Calu3 (cell line): ENCODE measurements at regions of chr18 and their contacts with region 1.

Region 1: GRCh38 chr18:74652392-74652988 is 54.8 kb downstream of the ZNF407 start:
- DNase-seq: peak; percentile 10
- H3K4me3 Mint-ChIP-seq: no peak overlapping the region
- H3K27ac Mint-ChIP-seq: no peak overlapping the region
- H3K4me1 Mint-ChIP-seq: peaks cover 1% of the 10 kb centered on the region
- H3K27me3 Mint-ChIP-seq: no peaks in the 10 kb centered on the region
- CTCF ChIP-seq: no peak

Region 2: GRCh38 chr18:74963820-74964446 is 311.4 kb after region 1 on chr18:
- CTCF ChIA-PET with region 1: no interaction called
- intact Hi-C with region 1: loop called (anchors 2 kb)
- DNase-seq: peak; percentile 43
- H3K4me3 Mint-ChIP-seq: no peak overlapping the region
- H3K27ac Mint-ChIP-seq: no peak overlapping the region
- H3K4me1 Mint-ChIP-seq: no peaks in the 10 kb centered on the region
- H3K27me3 Mint-ChIP-seq: no peaks in the 10 kb centered on the region
- CTCF ChIP-seq: peak; percentile 60

Region 3: GRCh38 chr18:75041586-75041985 is 389.1 kb after region 1 on chr18:
- CTCF ChIA-PET with region 1: interaction called, 6 read pairs
- intact Hi-C with region 1: loop called (anchors 1 kb)
- DNase-seq: no peak
- H3K4me3 Mint-ChIP-seq: no peak overlapping the region
- H3K27ac Mint-ChIP-seq: no peak overlapping the region
- H3K4me1 Mint-ChIP-seq: no peaks in the 10 kb centered on the region
- H3K27me3 Mint-ChIP-seq: no peaks in the 10 kb centered on the region
- CTCF ChIP-seq: peak; percentile 40

Region 4: DNA sequence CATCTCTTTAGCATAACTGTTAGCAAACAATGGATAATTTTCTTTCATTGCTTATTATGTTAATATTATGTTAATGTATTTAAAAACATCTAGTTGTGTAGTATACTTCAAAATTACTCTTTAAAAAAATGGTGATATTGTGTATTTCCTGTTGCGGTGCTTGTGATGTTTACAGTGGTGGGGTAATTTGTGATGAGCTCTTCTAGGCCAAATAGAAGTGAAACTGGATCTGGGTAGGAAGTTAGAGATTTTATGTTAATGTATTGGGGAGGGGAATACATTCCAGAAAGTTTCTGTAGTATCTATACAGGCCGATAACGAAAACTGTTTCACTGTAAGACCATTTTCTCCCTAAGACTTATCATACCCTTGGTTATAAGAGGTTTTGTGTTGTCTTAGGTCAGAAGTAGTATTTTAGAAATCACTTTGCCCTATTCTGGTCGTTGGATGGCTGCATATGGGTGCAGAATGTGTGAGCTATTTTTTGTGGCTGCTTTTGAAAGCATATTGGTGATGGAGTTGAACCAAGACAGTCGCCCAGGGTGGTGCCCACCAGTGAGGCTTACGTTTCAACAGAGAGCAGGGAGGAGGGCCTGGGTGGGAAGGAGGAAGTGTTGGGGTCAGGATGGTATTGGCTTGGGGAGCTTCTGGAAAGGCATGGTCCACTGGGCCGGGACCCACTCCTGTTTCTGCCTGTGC is 563.9 kb after region 1 on chr18:
- CTCF ChIA-PET with region 1: no interaction called
- intact Hi-C with region 1: loop called (anchors 5 kb)
- DNase-seq: no peak
- H3K4me3 Mint-ChIP-seq: no peak overlapping the region
- H3K27ac Mint-ChIP-seq: no peak overlapping the region
- H3K4me1 Mint-ChIP-seq: peaks cover 47% of the 10 kb centered on the region
- H3K27me3 Mint-ChIP-seq: no peaks in the 10 kb centered on the region
- CTCF ChIP-seq: no peak

Region 5: DNA sequence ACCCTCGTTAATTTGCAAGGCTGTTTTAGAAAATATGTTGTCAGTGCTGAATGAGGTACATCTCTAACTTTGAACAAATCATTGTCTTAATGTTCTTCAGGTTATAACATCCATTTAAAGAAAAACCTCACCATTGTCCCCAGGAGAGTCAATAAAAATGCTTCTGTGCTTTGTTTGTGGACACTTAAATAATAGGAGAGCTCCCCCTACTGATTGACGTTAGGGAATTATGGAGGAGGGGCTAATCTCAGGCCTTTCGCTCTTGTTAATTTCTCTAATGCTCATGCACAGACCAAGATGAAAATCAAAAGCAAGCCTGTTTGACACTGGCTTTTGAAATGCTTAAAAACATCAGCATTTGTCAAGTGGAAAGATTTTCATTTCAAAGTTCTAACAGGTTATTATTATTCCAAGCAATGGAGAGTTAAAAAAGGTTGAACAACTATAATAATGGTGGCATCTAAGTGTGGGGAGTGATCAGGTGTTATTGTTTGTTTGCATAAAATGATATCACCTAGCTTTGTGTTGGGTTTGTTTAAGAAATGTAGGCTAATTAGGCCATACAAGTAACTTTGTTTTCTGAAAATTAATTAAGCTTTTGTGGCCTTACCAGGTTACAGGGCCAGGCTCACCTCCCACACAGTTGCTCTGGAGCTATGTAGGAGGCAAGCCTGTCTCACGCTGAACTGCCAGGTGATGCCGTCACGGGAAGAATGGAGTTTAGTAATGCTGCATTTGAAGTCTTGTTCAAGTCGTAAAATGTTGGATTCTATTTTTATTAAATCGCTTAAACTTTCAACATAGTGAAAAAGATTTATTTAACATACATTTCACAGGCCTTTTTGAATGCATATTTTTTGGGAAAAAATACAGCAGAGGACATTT is 826.7 kb after region 1 on chr18:
- CTCF ChIA-PET with region 1: no interaction called
- intact Hi-C with region 1: loop called (anchors 2 kb)
- DNase-seq: peak; percentile 13
- H3K4me3 Mint-ChIP-seq: no peak overlapping the region
- H3K27ac Mint-ChIP-seq: no peak overlapping the region
- H3K4me1 Mint-ChIP-seq: no peaks in the 10 kb centered on the region
- H3K27me3 Mint-ChIP-seq: no peaks in the 10 kb centered on the region
- CTCF ChIP-seq: peak; percentile 10

Region 6: GRCh38 chr18:76349067-76349715 is 1696.7 kb after region 1 on chr18:
- CTCF ChIA-PET with region 1: no interaction called
- intact Hi-C with region 1: loop called (anchors 10 kb)
- DNase-seq: peak; percentile 70
- H3K4me3 Mint-ChIP-seq: peak overlapping the region; percentile 58
- H3K27ac Mint-ChIP-seq: peak overlapping the region; percentile 43
- H3K4me1 Mint-ChIP-seq: peaks cover 33% of the 10 kb centered on the region
- H3K27me3 Mint-ChIP-seq: no peaks in the 10 kb centered on the region
- CTCF ChIP-seq: peak; percentile 81